Activated CD4-positive, alpha-beta memory T cell treated with anti-CD3 and anti-CD28 coated beads, Interleukin-2, amount 10 ng/mL, durations not matched to agents 7 days and 5 days (primary cell): ENCODE measurements at regions of chr1 and their contacts with region 1.

Region 1: DNA sequence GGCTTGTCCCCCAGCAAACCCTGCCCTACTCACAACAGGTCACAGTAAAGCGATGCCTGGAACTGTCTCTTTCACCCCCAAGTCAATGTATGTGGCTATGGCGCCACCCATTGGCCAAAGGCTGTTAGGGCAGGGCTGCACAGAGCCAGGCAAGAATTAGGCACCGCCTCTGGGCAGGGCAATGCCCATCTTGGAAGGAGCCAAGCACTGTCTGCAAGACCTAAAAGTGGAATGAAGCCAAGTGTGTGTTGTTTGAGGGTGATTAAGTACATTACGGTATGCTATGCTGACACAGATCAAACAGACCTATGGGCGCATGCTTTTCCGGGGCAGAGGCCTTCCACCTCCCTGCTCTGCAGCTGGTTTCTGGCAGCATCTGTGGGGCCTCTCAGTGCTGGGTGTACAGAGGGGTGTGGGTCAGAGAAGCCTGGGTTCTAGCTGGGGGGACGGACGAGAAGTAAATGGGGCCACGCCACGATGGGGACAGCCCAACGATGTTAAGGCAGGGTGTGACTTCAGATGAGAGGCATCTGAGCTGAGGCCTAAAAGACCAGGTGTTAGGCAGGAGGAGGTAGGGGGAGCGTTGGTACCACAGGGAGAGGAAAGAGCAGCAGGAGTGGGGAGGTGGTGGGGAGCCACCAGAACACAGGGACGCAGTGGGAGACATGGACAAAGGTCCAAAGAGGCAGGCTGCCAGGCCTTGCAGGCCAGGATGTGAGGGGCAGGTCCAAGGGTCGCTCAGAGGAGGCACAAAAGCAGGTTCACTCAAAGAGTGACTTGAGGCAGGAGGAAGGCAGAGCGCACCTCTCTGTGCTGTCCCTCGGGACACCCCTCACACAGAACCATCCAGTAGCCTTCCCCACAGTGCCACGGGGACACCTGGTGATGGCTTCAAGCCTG is 49.8 kb downstream of the ACOT7 start:
- DNase-seq: peak; percentile 78
- H3K4me3 Mint-ChIP-seq: no peak overlapping the region
- H3K27ac Mint-ChIP-seq: no peak overlapping the region
- H3K4me1 Mint-ChIP-seq: peaks cover 18% of the 10 kb centered on the region
- H3K27me3 Mint-ChIP-seq: no peaks in the 10 kb centered on the region

Region 2: GRCh38 chr1:6222636-6223035 is 121.1 kb before region 1 on chr1:
- CTCF ChIA-PET with region 1: no interaction called
- POLR2A ChIA-PET with region 1: no interaction called
- DNase-seq: no peak
- H3K4me3 Mint-ChIP-seq: no peak overlapping the region
- H3K27ac Mint-ChIP-seq: no peak overlapping the region
- H3K4me1 Mint-ChIP-seq: peaks cover 17% of the 10 kb centered on the region
- H3K27me3 Mint-ChIP-seq: no peaks in the 10 kb centered on the region

Region 3: GRCh38 chr1:6309564-6309963 is 34.2 kb before region 1 on chr1:
- CTCF ChIA-PET with region 1: no interaction called
- POLR2A ChIA-PET with region 1: no interaction called
- DNase-seq: no peak
- H3K4me3 Mint-ChIP-seq: no peak overlapping the region
- H3K27ac Mint-ChIP-seq: no peak overlapping the region
- H3K4me1 Mint-ChIP-seq: no peaks in the 10 kb centered on the region
- H3K27me3 Mint-ChIP-seq: no peaks in the 10 kb centered on the region

Region 4: GRCh38 chr1:6331543-6332273 is 12.0 kb before region 1 on chr1:
- CTCF ChIA-PET with region 1: interaction called, 10 read pairs
- POLR2A ChIA-PET with region 1: no interaction called
- DNase-seq: no peak
- H3K4me3 Mint-ChIP-seq: no peak overlapping the region
- H3K27ac Mint-ChIP-seq: no peak overlapping the region
- H3K4me1 Mint-ChIP-seq: no peaks in the 10 kb centered on the region
- H3K27me3 Mint-ChIP-seq: no peaks in the 10 kb centered on the region

Region 5: GRCh38 chr1:6393400-6394187 is 49.8 kb after region 1 on chr1 and contains the start of gene ACOT7:
- CTCF ChIA-PET with region 1: interaction called, 25 read pairs
- POLR2A ChIA-PET with region 1: interaction called, 30 read pairs
- DNase-seq: peak; percentile 92
- H3K4me3 Mint-ChIP-seq: peak within 1 kb of the TSS; percentile 86
- H3K27ac Mint-ChIP-seq: peak within 1 kb of the TSS; percentile 88
- H3K4me1 Mint-ChIP-seq: peaks cover 40% of the 10 kb centered on the region
- H3K27me3 Mint-ChIP-seq: no peaks in the 10 kb centered on the region
- total RNA-seq, gene ACOT7: 56.8 to 58.6 TPM

Region 6: DNA sequence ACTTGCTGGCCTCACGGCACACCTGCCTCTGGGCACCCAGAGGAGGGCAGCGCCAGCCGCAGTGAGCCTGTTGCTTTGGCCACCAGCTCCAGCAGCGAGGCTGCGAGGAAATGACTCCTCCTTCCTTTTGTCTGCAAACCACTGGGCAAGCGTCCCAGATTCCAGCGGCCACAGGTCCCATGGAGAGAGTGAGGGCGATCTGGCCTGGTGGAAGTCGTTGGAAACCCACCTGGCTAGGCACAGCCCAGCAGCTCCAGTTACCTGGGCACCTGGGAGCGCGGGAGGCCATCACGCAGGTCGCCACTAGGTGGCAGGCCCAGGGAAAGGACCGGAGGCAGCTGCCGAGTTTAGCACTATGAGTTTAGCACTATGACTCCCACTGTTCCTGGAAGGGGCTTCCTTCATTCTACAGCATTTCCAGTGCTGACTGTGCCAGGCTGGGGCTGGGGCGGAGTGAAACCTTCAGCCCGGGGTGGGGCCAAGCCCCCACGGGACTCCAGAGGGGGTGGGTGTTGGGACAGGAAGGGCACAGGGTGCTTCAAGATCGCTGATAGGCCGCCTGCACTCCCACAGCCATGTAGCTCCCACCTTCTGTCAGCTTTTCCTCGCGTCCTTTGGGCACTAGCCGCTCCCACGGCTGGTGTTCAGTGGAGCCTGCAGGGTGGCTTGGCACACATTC is 79.7 kb after region 1 on chr1:
- CTCF ChIA-PET with region 1: interaction called, 11 read pairs
- POLR2A ChIA-PET with region 1: no interaction called
- DNase-seq: peak; percentile 71
- H3K4me3 Mint-ChIP-seq: no peak overlapping the region
- H3K27ac Mint-ChIP-seq: no peak overlapping the region
- H3K4me1 Mint-ChIP-seq: peaks cover 35% of the 10 kb centered on the region
- H3K27me3 Mint-ChIP-seq: peaks cover 49% of the 10 kb centered on the region

Region 7: DNA sequence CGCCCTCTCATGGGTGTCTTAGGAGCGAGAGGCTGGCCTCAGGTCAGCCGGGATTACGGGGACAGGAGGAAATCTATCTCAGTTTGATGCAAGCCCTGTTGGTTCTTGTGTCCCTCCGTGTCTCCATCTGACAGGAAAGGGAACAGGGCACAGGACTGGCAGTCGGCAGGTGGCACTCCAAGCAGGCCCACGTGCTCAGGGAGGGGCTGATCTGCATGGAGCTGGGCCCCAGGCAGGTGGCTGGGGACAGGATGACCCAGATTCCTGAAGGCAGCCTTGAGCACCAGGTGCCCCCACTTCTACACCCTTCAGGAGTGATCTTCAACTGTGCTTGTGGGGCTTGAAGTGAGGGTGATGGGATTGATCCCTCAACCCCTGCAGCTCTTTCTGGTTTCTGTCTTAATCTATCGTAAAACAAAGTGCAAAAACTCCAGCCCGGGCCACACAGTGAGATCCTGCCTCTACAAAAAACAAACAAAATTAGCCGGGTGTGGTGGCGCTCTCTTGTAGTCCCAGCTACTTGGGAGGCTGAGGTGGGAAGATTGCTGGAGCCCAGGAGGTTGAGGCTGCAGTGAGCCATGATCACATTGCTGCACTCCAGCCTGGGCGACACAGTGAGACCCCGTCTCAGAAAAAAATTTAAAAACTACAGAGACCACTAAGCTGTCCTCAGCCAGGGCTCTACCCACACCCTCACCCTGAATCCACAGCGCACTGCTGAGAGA is 139.4 kb after region 1 on chr1:
- CTCF ChIA-PET with region 1: no interaction called
- POLR2A ChIA-PET with region 1: no interaction called
- DNase-seq: no peak
- H3K4me3 Mint-ChIP-seq: no peak overlapping the region
- H3K27ac Mint-ChIP-seq: no peak overlapping the region
- H3K4me1 Mint-ChIP-seq: peaks cover 9% of the 10 kb centered on the region
- H3K27me3 Mint-ChIP-seq: peaks cover 31% of the 10 kb centered on the region